ENCODE measurements at regions of chr5 and their contacts with region 1.

Region 1: GRCh38 chr5:5492087-5492933 is 69.8 kb downstream of the ICE1 start:
- DNase-seq: peak; percentile 69
- H3K4me3 Mint-ChIP-seq: peak overlapping the region; percentile 11
- H3K27ac Mint-ChIP-seq: no peak overlapping the region
- H3K4me1 Mint-ChIP-seq: peaks cover 7% of the 10 kb centered on the region
- H3K27me3 Mint-ChIP-seq: no peaks in the 10 kb centered on the region
- CTCF ChIP-seq: peak; percentile 64

Region 2: DNA sequence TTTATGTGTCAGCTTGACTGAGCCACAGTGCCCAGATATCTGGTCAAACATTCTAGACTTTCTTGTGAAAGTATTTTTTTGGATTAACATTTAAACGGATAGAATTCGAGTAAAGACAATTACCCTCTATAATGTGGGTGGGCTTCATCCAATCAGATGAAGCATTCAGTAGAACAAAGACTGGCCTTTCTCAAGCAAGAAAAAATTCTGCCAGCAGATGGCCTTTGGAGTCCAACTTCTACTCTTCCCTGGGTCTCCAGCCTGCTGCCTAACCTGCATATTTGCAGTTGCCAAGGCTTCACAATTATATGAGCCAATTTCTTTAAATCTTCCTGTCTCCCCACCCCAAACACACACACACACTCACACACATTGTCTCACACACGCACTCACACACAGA is 799.7 kb after region 1 on chr5:
- CTCF ChIA-PET with region 1: interaction called, 3 read pairs
- POLR2A ChIA-PET with region 1: no interaction called
- intact Hi-C with region 1: loop called (anchors 5 kb)
- DNase-seq: peak; percentile 26
- H3K4me3 Mint-ChIP-seq: no peak overlapping the region
- H3K27ac Mint-ChIP-seq: no peak overlapping the region
- H3K4me1 Mint-ChIP-seq: no peaks in the 10 kb centered on the region
- H3K27me3 Mint-ChIP-seq: peaks cover 57% of the 10 kb centered on the region
- CTCF ChIP-seq: peak; percentile 19

Region 3: DNA sequence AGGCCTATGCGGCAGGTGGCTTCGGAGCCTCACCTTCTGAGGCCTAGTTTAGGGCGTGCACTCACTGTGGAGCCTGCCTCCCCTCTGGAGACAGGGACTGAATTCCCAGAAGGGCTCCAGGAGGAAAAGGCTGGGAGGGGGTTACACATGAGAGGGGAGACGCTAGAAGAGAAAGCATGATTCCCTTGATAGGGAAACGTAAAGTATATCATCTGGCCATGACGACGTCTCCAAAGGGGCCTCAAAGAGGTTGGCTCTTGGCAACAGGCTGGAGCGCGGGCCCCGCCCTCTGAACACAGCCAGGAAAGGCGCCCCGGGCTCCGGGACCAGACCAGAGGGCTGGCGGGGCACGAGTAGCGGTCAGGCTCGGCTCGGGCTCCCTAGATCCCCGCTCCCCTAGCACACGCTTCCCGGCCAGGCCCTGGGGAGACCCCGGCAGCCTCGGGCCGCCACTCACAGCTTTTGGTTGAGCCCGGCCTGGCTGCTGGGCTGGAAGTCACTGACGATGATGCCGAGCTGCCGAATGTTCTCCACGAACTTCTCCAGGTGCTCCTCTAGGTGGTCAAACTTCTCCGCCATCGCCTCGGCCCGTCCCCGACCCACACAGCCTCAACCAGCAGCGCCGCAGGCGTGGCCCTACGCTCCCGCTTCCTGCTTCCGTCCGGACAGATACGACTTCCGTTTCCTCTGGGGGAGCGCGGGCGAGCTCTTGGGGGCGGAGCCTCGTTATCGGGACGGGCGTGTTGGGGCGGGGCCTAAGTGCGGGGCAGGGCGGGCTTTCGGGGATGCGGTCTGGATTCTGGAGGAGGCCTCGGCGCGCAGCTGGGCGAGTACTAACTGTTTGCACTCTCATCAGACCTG is 885.8 kb after region 1 on chr5 and contains the start of gene MED10:
- CTCF ChIA-PET with region 1: interaction called, 7 read pairs
- POLR2A ChIA-PET with region 1: no interaction called
- intact Hi-C with region 1: loop called (anchors 1 kb)
- DNase-seq: peak; percentile 92
- H3K4me3 Mint-ChIP-seq: peak within 1 kb of the TSS; percentile 99
- H3K27ac Mint-ChIP-seq: peak within 1 kb of the TSS; percentile 98
- H3K4me1 Mint-ChIP-seq: peaks cover 14% of the 10 kb centered on the region
- H3K27me3 Mint-ChIP-seq: no peaks in the 10 kb centered on the region
- CTCF ChIP-seq: no peak
- total RNA-seq, gene MED10: 84.9 and 85.1 TPM in 2 replicates

Region 4: GRCh38 chr5:6525910-6526309 is 1033.6 kb after region 1 on chr5:
- CTCF ChIA-PET with region 1: interaction called, 3 read pairs
- POLR2A ChIA-PET with region 1: no interaction called
- intact Hi-C with region 1: loop called (anchors 2 kb)
- DNase-seq: peak; percentile 29
- H3K4me3 Mint-ChIP-seq: no peak overlapping the region
- H3K27ac Mint-ChIP-seq: no peak overlapping the region
- H3K4me1 Mint-ChIP-seq: no peaks in the 10 kb centered on the region
- H3K27me3 Mint-ChIP-seq: peaks cover 62% of the 10 kb centered on the region
- CTCF ChIP-seq: no peak

Measured in MCF 10A (cell line).